ENCODE measurements at regions of chr17 and their contacts with region 1.

Region 1: DNA sequence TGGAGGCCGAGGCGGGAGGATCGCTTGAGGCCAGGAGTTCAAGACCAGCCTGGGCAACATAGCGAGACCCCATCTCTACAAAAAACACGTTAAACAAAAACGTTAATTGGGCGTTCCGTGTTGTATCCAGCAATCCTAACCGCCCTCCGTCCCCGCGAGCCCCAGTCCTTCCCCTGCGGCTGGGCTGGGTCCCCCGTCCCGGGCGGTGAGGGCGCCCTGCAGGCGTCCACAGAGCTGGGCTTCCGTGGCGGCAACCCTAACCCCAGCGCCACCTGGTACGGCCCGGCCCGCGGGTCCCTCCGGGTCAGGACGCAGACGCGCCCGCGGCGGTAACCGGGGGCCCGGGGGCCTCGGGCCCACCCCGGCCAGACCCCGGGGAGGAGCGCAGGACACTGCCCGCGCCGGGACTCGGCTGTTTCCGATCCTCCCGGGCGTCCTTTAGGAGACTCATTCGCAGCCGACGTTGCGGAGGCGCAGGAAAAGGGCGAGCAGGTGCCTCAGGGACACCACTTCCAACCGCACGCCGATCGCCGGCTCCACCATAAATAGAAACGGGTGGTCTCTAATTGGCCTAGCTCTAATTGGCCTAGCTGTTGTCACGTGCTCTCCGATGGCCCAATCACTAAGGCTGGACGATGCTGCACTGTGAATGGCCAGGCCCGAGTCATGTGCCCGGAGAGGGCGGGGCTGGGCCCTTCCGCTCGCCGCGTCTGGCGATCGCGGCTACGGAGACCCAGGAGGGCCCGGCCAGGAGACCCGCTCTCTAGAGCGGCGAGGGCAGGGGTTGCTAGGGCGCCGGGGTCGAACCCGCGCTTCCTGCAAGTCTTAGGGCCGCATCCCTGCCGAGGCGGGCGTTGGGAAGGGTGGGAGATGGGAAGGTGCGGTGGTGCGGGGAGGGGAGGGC is 19.0 kb upstream of the CSNK1D start:
- DNase-seq: peak; percentile 98

Region 2: GRCh38 chr17:82236142-82236981 is 56.1 kb before region 1 on chr17:
- CTCF ChIA-PET with region 1: interaction called, 3 read pairs
- POLR2A ChIA-PET with region 1: interaction called, 13 read pairs
- DNase-seq: peak; percentile 80

Region 3: GRCh38 chr17:82273327-82274133 is 19.0 kb before region 1 on chr17 and contains the start of gene CSNK1D:
- CTCF ChIA-PET with region 1: interaction called, 3 read pairs
- POLR2A ChIA-PET with region 1: interaction called, 30 read pairs
- DNase-seq: peak; percentile 98